ENCODE measurements at regions of chr21 and their contacts with region 1.

Region 1: DNA sequence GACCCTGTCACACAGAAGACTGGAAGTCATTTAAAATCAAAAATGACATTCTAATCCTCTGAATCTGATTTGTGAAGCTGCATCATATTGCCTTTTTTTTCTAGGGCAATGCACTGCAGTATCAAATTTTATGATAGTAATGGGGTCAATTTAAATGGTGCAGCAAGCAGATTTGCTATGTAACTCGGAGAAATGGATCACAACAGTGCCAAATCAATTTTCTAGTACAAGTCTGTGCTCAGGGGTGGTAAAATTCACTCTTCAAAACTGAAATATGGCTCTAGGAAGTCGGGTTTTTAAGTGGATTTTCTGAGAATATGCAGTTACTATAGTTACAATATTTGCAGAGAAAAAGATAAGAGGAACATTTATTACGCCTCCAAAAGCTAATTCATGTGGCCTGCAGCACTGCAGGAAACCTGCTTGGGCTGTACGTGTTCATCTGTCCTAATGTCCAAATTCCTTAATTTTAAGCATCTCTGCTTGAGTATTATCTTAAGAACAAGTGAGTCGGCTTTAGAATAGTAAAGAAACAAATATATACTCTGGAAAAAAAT is 31.5 kb downstream of the HLCS start:
- DNase-seq: no peak
- H3K4me3 ChIP-seq: no peak overlapping the region
- H3K27ac ChIP-seq: no peak overlapping the region
- H3K4me1 ChIP-seq: peaks cover 5% of the 10 kb centered on the region
- H3K27me3 ChIP-seq: no peaks in the 10 kb centered on the region
- CTCF ChIP-seq: no peak
- POLR2A ChIP-seq: no peak

Region 2: GRCh38 chr21:36510114-36510655 is 424.8 kb before region 1 on chr21:
- intact Hi-C with region 1: loop called (anchors 5 kb)
- DNase-seq: peak; percentile 91
- H3K4me3 ChIP-seq: no peak overlapping the region
- H3K27ac ChIP-seq: peak overlapping the region; percentile 87 to 92
- H3K4me1 ChIP-seq: peaks cover 31% of the 10 kb centered on the region
- H3K27me3 ChIP-seq: no peaks in the 10 kb centered on the region
- CTCF ChIP-seq: no peak
- POLR2A ChIP-seq: no peak